GM12878 (cell line): ENCODE measurements at regions of chr18 and their contacts with region 1.

Region 1: DNA sequence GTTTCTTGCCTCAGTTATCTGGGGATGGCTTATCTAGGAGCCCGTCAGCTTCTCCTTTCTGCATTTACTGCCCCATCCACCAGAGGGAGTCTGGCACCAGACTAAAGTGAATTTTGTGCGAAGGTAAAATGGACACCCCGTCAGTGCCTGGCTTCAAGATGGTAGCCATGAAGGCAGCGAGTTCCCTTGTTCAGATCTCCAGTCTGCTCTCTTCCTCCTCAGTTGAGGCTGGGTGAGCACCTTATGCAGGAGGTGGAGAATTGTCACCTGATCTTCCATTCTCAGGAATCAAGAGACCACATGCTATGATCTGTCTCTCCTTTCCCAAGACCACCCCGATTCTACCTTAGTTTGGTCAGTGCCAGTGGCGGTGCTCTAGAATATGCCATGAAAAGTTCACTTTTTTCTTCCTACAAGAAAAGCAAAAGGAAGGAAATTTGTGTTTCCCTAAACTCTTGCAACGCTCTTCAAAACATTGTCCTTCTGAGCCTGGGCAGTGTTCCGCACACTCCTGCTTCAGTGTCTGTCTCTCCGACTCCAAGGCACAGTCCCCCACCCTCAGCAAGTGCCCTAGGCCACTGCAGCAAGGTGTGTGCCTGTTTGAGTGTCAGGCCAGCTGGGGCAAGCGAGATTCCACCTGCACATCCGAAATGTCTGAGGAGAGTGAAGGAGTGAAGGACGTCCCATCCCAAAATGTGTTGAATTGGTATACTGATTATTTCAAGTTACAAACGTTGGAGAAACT is 168.6 kb downstream of the SS18 start:
- DNase-seq: peak; percentile 20
- ATAC-seq: peak; percentile 97
- H3K4me3 ChIP-seq: no peak overlapping the region
- H3K27ac ChIP-seq: no peak overlapping the region
- H3K4me1 ChIP-seq: no peaks in the 10 kb centered on the region
- H3K27me3 ChIP-seq: no peaks in the 10 kb centered on the region
- CTCF ChIP-seq: peak; percentile 75 to 84 (median 77)
- EP300 ChIP-seq: no peak
- POLR2A ChIP-seq: no peak
- RAD21 ChIP-seq: peak; percentile 96

Region 2: DNA sequence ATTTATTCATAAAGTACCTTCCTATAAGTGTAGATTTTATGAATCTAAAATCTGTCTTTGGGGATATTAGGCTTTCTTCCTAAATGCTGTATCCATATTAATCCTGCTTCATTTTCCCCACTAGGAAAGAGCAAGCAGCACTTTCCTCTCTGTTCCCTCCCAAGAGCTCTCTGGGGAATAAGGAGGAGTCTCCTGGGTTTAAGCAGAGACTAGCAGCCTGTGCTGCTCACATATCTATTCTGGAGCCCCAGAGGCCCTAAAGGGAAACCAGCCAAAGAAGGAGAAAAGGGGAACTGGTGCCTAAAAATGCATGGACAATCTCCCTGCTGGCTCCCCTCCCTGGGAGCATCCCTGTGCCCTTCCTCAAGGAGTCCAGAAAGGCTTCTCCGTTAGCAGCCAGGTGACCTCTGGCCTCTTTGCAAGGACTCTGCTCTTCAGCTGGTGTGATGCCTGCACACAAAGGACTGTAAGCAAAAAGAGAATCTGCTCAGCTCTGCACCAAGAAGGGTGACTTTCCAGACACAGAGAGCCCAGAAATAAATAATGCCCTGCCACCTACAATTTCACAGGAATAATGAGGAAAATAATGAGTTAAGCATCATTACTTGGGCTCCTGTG is 102.0 kb before region 1 on chr18:
- CTCF ChIA-PET with region 1: no interaction called
- POLR2A ChIA-PET with region 1: no interaction called
- RAD21 ChIA-PET with region 1: no interaction called
- SMC1A ChIA-PET with region 1: no interaction called
- in situ Hi-C with region 1: no loop called
- intact Hi-C with region 1: no loop called
- DNase-seq: no peak
- ATAC-seq: no peak
- H3K4me3 ChIP-seq: no peak overlapping the region
- H3K27ac ChIP-seq: no peak overlapping the region
- H3K4me1 ChIP-seq: no peaks in the 10 kb centered on the region
- H3K27me3 ChIP-seq: no peaks in the 10 kb centered on the region; a peak in 1 of 4 replicates
- CTCF ChIP-seq: no peak
- EP300 ChIP-seq: no peak
- POLR2A ChIP-seq: no peak
- RAD21 ChIP-seq: no peak

Region 3: GRCh38 chr18:26017929-26018328 is 96.1 kb after region 1 on chr18:
- CTCF ChIA-PET with region 1: interaction called, 6 read pairs
- POLR2A ChIA-PET with region 1: no interaction called
- RAD21 ChIA-PET with region 1: interaction called, 7 read pairs
- SMC1A ChIA-PET with region 1: interaction called, 3 read pairs
- in situ Hi-C with region 1: no loop called
- intact Hi-C with region 1: loop called (anchors 1 kb)
- DNase-seq: no peak
- ATAC-seq: 0 out of 3 replicates have a peak, but pooled peaks have one; percentile 21
- H3K4me3 ChIP-seq: no peak overlapping the region
- H3K27ac ChIP-seq: no peak overlapping the region; the same call in 1 of the 2 replicates
- H3K4me1 ChIP-seq: peaks cover 4% of the 10 kb centered on the region; the same call in 1 of the 2 replicates
- H3K27me3 ChIP-seq: no peaks in the 10 kb centered on the region
- CTCF ChIP-seq: peak in 2 of 3 experiments; percentile 16 to 38; a peak in 2 of 6 replicates
- EP300 ChIP-seq: no peak
- POLR2A ChIP-seq: no peak
- RAD21 ChIP-seq: peak; percentile 68

Region 4: DNA sequence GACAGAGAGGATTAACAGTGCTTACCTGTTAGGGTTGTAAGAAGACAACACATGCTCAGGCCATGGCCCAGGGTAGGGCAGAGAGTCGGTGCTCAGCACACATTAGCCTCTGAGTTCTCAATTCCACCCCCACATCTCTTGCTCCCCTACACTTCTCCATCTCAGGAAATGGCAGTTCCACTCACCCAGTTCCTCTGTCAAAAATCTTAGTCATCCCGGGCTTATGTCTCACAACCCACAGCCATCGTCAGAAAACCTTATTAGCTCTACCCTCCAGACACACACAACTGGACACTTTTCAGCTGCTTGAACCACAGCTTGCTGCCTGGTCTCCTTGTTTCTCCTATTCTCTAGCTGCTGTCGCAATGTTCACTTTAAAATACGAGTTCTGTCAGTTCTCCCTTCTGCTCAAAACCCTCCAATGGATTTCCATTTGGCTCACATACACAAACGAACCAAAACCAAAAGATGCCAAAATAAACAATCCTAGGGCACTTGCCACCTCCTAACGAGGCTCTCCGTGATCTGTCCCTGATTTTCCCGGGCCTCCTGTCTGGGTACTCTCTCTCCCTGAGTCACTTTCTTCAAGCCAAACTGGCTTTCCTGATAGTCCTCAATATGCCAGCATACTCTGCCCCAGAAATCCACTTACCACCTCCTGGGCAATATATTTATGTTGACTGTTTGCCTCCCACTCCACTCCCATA is 536.8 kb after region 1 on chr18:
- CTCF ChIA-PET with region 1: no interaction called
- POLR2A ChIA-PET with region 1: no interaction called
- RAD21 ChIA-PET with region 1: no interaction called
- SMC1A ChIA-PET with region 1: no interaction called
- in situ Hi-C with region 1: no loop called
- intact Hi-C with region 1: no loop called
- DNase-seq: peak; percentile 70
- ATAC-seq: peak; percentile 75
- H3K4me3 ChIP-seq: no peak overlapping the region
- H3K27ac ChIP-seq: peak overlapping the region; percentile 75
- H3K4me1 ChIP-seq: peaks cover 48% of the 10 kb centered on the region
- H3K27me3 ChIP-seq: no peaks in the 10 kb centered on the region
- CTCF ChIP-seq: no peak
- EP300 ChIP-seq: peak; percentile 48 to 68; a peak in 2 of 4 replicates
- POLR2A ChIP-seq: peak; percentile 33; the same call in 1 of the 2 replicates
- RAD21 ChIP-seq: no peak